ENCODE measurements at regions of chr1 and their contacts with region 1.

Region 1: GRCh38 chr1:210373885-210374599 is 45.3 kb downstream of the HHAT start:
- H3K4me3 ChIP-seq: no peak overlapping the region
- H3K27ac ChIP-seq: peak overlapping the region; percentile 75
- H3K4me1 ChIP-seq: peaks cover 4% of the 10 kb centered on the region
- CTCF ChIP-seq: peak; percentile 90

Region 2: DNA sequence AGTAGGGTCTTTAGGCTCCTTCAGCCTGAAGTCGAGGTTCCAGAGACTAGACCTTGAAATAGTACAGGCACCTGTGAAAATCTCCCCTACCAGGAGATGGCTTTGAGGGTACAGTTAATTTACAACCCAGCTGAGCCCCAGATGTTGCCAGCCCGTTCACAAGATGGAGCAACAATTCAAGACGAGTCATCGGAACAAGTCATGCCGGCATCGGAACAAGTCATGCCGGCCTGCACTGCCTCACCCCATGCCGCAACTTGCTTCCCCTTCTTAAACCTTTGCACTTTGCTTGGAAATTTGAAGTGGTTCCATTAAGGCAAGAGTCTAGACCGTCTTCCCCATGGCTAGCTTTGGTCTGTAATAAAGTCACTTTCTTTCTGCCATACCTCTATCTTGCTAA is 29.3 kb before region 1 on chr1:
- CTCF ChIA-PET with region 1: interaction called, 14 read pairs
- POLR2A ChIA-PET with region 1: no interaction called
- H3K4me3 ChIP-seq: no peak overlapping the region
- H3K27ac ChIP-seq: no peak overlapping the region
- H3K4me1 ChIP-seq: peaks cover 19% of the 10 kb centered on the region
- CTCF ChIP-seq: no peak

Region 3: GRCh38 chr1:210360852-210361477 is 13.1 kb before region 1 on chr1:
- CTCF ChIA-PET with region 1: interaction called, 47 read pairs
- POLR2A ChIA-PET with region 1: interaction called, 4 read pairs
- H3K4me3 ChIP-seq: no peak overlapping the region
- H3K27ac ChIP-seq: no peak overlapping the region
- H3K4me1 ChIP-seq: no peaks in the 10 kb centered on the region
- CTCF ChIP-seq: peak; percentile 44; the same call in 1 of the 2 replicates

Region 4: DNA sequence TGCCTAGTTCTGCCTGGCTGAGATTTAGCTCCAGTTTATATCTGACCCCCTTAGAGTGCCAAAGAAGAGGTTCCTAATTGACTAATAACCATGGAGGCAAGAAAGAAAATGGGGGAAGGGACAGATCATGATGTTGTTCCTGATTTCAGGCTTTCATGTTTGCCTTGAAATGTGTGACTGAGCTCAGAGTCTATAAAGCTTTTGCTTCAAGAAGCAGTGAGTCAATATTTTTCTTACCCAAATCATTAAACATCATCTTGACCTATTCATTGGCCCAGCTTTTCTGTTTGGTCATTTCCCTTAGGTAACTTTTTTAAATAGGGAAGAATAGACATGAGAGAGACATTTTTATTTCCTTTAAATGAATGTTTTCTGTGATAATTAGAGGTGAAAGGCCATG is 10.6 kb after region 1 on chr1:
- CTCF ChIA-PET with region 1: interaction called, 16 read pairs
- POLR2A ChIA-PET with region 1: interaction called, 5 read pairs
- H3K4me3 ChIP-seq: no peak overlapping the region
- H3K27ac ChIP-seq: no peak overlapping the region
- H3K4me1 ChIP-seq: peaks cover 9% of the 10 kb centered on the region
- CTCF ChIP-seq: no peak

Region 5: DNA sequence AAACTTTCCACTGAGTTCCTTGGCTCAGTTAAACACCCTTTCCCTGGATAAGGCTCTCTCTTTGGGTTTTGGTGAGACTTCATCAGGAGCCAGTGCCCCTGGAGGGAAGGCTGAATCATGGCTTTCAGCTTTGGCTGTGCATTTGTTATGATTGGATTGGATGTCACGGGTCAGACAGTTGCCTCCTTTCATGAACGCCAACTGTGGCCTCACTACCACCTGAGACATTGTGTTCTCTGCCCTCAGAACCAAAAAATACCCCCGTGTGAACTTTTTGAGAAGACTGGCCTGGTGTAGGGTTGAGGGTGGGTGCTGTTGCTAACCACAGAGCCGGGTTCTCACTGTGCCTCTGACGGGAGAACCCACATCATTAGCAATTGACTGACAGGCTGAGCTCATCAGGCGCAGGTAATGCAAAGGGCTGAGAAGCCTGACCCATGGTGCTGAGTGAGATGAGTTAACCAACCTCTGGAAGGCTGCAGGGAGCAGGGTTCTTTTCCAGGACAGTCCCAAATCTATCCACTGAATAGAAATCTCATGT is 20.3 kb after region 1 on chr1:
- CTCF ChIA-PET with region 1: interaction called, 53 read pairs
- POLR2A ChIA-PET with region 1: no interaction called
- H3K4me3 ChIP-seq: no peak overlapping the region
- H3K27ac ChIP-seq: no peak overlapping the region
- H3K4me1 ChIP-seq: peaks cover 13% of the 10 kb centered on the region
- CTCF ChIP-seq: no peak

Region 6: GRCh38 chr1:210400043-210400840 is 26.2 kb after region 1 on chr1:
- CTCF ChIA-PET with region 1: interaction called, 53 read pairs
- POLR2A ChIA-PET with region 1: no interaction called
- H3K4me3 ChIP-seq: no peak overlapping the region
- H3K27ac ChIP-seq: peak overlapping the region; percentile 32; the same call in 1 of the 2 replicates
- H3K4me1 ChIP-seq: peaks cover 4% of the 10 kb centered on the region
- CTCF ChIP-seq: peak; percentile 83

Region 7: DNA sequence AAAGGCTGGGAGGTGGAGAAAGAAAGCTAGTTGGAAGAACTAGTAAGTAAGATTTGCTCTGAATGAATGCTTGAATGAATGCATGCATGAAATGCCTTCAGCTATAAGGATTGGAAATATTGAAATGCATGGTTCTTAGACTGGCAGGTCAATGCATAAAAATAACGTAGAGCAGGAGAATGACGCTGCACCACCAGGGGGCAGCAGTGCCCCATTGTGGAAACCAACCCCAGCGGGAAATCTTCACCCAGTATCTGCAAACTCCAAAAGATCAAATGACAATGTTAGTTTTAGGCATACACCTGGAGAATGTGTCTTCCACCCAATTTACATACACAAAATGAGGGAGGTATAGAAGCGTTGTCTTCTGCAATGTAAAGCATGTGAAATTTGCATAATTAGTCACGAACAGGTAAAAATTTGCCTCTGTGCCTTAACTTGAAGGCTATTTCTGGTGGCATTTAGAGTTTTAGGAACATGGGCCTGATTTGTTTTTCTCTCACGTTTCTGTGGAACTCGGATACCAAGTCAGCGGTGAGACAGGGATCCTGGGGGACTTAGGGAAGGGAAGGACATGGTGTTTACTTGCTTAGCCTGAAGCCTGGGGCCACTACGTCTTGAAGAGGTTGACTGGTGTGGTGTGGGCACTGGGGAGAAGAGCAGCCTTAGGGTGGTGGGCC is 33.3 kb after region 1 on chr1:
- CTCF ChIA-PET with region 1: interaction called, 53 read pairs
- POLR2A ChIA-PET with region 1: no interaction called
- H3K4me3 ChIP-seq: no peak overlapping the region
- H3K27ac ChIP-seq: no peak overlapping the region
- H3K4me1 ChIP-seq: peaks cover 4% of the 10 kb centered on the region; the same call in 1 of the 2 replicates
- CTCF ChIP-seq: peak; percentile 81

Region 8: DNA sequence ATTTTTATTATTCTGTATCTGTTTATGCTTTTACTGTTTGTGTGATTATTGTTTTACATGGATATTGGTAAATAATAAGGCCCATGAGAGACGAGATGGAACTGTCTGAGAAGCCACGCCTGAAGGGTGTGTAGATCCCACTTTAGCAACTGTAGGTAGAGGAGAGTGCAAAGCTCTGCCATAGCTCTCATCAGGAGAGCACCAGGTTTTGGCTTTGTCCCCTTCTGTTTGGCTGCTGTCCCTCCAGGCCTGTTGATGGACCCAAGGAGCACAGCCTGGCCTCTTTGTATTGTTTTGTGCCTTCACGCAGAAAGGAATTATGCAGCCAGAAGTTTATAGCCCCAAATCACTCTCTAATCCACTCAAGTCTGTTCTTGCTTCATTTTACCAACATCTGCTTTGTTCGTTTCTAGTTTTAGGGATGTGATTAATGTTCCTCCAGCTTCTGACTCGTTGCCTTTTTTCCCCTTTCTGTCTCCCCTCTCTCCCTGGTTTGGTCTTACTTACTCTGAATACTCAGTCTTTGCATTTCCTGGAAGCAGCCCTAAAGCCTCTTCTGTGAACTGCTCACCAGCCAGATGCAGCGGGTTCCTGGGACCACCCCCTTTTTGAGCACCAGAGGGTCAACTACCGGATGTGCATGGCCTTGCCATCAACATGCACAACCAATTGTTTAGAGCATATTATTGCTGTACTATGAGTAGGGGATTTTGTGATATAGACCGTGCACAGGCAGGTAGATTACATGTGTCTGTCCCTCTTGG is 82.0 kb after region 1 on chr1:
- CTCF ChIA-PET with region 1: no interaction called
- POLR2A ChIA-PET with region 1: no interaction called
- H3K4me3 ChIP-seq: no peak overlapping the region
- H3K27ac ChIP-seq: no peak overlapping the region
- H3K4me1 ChIP-seq: no peaks in the 10 kb centered on the region; the same call in 1 of the 2 replicates
- CTCF ChIP-seq: no peak

Region 9: GRCh38 chr1:210477381-210477783 is 103.3 kb after region 1 on chr1:
- CTCF ChIA-PET with region 1: no interaction called
- POLR2A ChIA-PET with region 1: no interaction called
- H3K4me3 ChIP-seq: no peak overlapping the region
- H3K27ac ChIP-seq: no peak overlapping the region
- H3K4me1 ChIP-seq: no peaks in the 10 kb centered on the region
- CTCF ChIP-seq: no peak

Region 10: DNA sequence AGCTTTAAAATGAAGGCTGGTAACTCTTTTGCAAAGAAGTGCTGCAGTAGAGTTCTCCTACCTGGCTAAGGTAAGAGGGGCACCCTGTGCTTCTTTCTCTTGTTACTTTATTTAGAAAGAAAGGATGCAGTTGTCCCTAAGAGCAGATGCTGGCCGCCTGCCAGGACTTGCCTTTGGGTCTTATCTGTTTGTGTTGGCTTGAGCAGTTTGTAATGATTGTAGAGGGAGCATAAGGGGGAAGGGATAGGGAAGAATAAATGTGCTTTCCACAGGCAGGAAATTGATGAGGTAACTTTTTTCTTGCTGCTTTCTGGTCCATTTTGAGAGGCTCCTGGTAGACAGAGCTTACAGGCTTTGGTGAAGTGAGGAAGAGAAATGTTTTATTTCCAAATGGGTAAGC is 184.3 kb after region 1 on chr1:
- CTCF ChIA-PET with region 1: no interaction called
- POLR2A ChIA-PET with region 1: no interaction called
- H3K4me3 ChIP-seq: no peak overlapping the region
- H3K27ac ChIP-seq: no peak overlapping the region
- H3K4me1 ChIP-seq: peaks cover 18% of the 10 kb centered on the region
- CTCF ChIP-seq: no peak

Region 11: DNA sequence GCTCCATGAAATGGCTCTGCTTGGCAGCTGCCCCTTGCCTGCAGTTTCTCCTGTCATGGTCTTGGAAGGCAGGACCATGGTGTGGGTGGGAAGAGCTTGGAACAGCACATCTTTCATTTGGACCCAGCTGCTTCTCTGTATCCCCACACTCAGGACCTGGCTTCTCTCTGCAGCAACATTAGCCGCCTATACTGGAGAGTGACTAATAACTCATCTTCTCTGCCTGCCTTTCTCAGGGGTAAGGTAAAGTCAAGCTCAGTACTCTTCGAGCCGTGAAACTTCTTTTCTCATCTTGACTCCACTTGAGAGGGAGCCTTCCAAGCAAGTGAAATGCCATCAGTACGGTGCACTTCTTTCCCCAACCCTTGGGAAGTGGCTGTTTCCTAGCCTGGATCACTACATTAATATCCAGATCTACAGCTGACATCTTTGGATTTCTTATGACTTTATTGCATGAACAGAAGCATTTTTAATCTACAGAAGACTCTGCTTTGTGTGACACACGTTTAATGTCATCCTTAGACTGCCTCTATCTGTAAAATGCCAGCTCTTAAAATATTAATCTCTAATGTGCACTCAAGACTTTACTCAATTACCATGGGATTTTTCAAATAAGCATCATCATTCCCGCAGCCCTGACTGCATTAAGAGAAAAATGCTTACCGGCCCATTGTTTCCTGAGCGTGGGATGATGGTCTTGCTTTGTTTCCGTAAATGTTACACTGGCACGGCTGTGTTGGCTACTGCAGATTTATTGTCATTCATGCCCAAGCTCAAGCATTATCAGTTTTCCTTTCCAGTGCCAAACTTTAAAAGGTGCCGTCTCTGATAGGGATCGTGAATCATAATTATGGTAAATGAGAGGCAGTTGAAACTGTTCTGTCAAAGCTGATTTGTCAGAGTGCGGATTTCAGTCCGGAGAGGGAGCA is 197.6 kb after region 1 on chr1:
- CTCF ChIA-PET with region 1: no interaction called
- POLR2A ChIA-PET with region 1: no interaction called
- H3K4me3 ChIP-seq: no peak overlapping the region
- H3K27ac ChIP-seq: no peak overlapping the region
- H3K4me1 ChIP-seq: no peaks in the 10 kb centered on the region
- CTCF ChIP-seq: no peak